Common myeloid progenitor, CD34-positive (primary cell): ENCODE measurements at regions of chr20 and their contacts with region 1.

Region 1: GRCh38 chr20:31496761-31497295 is 17.4 kb upstream of the HM13 start:
- DNase-seq: no peak
- H3K4me3 ChIP-seq: no peak overlapping the region
- H3K27ac ChIP-seq: no peak overlapping the region
- H3K4me1 ChIP-seq: no peaks in the 10 kb centered on the region
- H3K27me3 ChIP-seq: peaks cover 0 to 13% (median 0%) of the 10 kb centered on the region in 5 experiments

Region 2: DNA sequence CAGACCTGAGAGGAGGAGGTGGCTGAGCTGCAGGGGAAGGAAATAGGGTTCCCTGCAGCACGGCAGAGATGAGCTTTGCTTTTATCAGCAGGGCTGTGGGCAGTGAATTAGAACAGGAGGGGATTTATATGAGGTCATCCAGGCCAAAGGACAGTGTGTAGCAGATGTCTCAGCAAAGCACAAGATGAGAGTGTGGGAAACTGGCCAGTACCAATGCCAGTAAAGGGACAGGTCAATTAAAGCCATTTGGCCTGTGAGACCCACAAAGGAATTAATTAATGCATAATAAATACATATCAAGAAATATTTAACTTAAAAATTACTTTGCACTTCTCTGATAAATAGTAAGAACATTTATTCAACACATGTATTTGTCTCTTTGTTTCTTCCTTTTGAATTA is 106.3 kb before region 1 on chr20 and contains the start of gene DEFB119:
- CTCF ChIA-PET with region 1: no interaction called
- POLR2A ChIA-PET with region 1: no interaction called
- DNase-seq: no peak
- H3K4me3 ChIP-seq: no peak within 1 kb of the TSS
- H3K27ac ChIP-seq: no peak within 1 kb of the TSS
- H3K4me1 ChIP-seq: no peaks in the 10 kb centered on the region
- H3K27me3 ChIP-seq: peaks cover 0 to 10% (median 5%) of the 10 kb centered on the region in 5 experiments

Region 3: GRCh38 chr20:31452575-31452974 is 44.3 kb before region 1 on chr20:
- CTCF ChIA-PET with region 1: interaction called, 117 read pairs
- POLR2A ChIA-PET with region 1: no interaction called
- DNase-seq: no peak
- H3K4me3 ChIP-seq: no peak overlapping the region
- H3K27ac ChIP-seq: no peak overlapping the region
- H3K4me1 ChIP-seq: no peaks in the 10 kb centered on the region
- H3K27me3 ChIP-seq: peaks cover 0 to 3% (median 2%) of the 10 kb centered on the region in 5 experiments

Region 4: GRCh38 chr20:31474097-31474436 is 22.8 kb before region 1 on chr20:
- CTCF ChIA-PET with region 1: interaction called, 21 read pairs
- POLR2A ChIA-PET with region 1: no interaction called
- DNase-seq: no peak
- H3K4me3 ChIP-seq: no peak overlapping the region
- H3K27ac ChIP-seq: no peak overlapping the region
- H3K4me1 ChIP-seq: peaks cover 0 to 15% (median 7%) of the 10 kb centered on the region in 4 experiments
- H3K27me3 ChIP-seq: peaks cover 0 to 39% (median 19%) of the 10 kb centered on the region in 5 experiments

Region 5: GRCh38 chr20:31485450-31486339 is 11.1 kb before region 1 on chr20:
- CTCF ChIA-PET with region 1: interaction called, 99 read pairs
- POLR2A ChIA-PET with region 1: no interaction called
- DNase-seq: peak in 2 of 3 donors; percentile 37 to 44
- H3K4me3 ChIP-seq: peak overlapping the region in 3 of 7 experiments; percentile 50 to 63 (median 51)
- H3K27ac ChIP-seq: no peak overlapping the region
- H3K4me1 ChIP-seq: peaks cover 0 to 31% (median 9%) of the 10 kb centered on the region in 4 experiments
- H3K27me3 ChIP-seq: peaks cover 0 to 18% (median 0%) of the 10 kb centered on the region in 5 experiments

Region 6: DNA sequence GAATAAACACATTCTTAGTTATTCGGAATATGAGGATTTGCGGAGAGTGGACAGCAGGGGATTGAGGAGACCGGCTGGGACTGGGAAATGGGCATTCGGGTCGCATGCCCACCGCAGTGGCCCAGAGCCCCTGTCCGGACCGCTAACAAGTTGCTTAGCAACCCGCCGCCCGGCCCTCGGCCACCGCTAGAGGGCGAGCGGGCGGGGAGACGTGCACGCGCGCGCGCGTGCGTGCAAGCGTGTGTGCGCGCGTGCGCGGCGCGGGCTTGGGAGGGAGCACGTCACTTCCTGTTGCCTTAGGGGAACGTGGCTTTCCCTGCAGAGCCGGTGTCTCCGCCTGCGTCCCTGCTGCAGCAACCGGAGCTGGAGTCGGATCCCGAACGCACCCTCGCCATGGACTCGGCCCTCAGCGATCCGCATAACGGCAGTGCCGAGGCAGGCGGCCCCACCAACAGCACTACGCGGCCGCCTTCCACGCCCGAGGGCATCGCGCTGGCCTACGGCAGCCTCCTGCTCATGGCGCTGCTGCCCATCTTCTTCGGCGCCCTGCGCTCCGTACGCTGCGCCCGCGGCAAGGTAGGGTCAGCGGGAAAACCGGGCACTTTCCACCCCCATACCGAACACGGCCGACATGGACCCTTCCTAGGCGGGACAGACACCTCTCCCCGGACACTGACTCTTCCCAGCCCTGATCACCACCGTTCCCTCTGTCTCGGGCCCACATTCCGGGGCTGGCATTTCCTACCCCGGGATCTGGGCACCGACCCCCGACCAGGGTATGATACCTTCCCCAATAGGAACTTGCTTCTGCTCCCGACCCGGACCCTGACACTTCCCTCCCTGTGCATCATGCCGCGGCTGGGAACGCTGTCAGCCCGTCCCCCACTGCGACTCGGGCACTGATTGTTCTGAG is 17.6 kb after region 1 on chr20 and contains the start of gene HM13:
- CTCF ChIA-PET with region 1: interaction called, 16 read pairs
- POLR2A ChIA-PET with region 1: no interaction called
- DNase-seq: peak; percentile 92 to 95 (median 94)
- H3K4me3 ChIP-seq: peak within 1 kb of the TSS; percentile 81 to 99 (median 88)
- H3K27ac ChIP-seq: peak within 1 kb of the TSS; percentile 66 to 90
- H3K4me1 ChIP-seq: peaks cover 3 to 36% (median 34%) of the 10 kb centered on the region in 4 experiments
- H3K27me3 ChIP-seq: no peaks in the 10 kb centered on the region

Region 7: GRCh38 chr20:31527266-31527665 is 30.4 kb after region 1 on chr20:
- CTCF ChIA-PET with region 1: no interaction called
- POLR2A ChIA-PET with region 1: no interaction called
- DNase-seq: no peak
- H3K4me3 ChIP-seq: no peak overlapping the region
- H3K27ac ChIP-seq: no peak overlapping the region
- H3K4me1 ChIP-seq: peaks cover 5 to 30% (median 24%) of the 10 kb centered on the region in 4 experiments
- H3K27me3 ChIP-seq: no peaks in the 10 kb centered on the region

Region 8: DNA sequence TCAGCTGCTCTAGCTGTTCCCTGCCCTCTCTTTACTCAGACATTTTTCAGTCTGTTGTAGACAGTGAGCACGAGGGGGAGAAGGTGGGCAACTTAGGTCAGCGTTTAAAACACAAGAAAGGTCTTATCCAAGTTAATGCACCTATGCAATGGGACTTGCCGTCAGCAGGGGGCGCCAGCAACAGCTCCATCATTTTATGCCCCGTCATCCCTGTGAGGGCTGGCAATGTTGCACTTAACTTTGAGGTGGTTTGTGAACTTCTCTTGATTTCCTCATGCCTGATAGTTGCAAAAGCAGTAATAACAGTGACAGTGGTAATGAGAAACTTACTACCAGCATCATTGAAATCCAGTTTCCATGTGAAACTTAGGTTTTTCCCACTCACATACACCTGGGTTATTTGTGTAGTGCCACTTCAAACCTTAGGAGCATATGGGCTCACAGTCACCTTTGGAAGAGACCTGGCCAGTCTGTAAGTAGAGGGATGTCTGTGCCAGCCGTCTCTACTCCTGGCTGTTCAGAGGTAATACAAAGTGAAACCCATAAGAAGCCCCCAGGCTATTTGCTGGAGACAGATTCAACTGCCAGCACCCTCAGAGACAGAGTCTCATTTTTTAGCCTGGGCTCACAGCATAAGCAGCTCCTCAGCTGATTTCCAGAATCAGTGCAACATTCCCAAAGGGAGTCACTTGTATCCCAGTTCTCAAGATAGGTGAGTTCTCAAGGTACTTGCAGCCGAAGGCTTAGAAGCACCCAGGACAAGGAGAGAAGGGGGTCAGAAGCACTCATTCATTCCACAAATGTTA is 63.5 kb after region 1 on chr20:
- CTCF ChIA-PET with region 1: no interaction called
- POLR2A ChIA-PET with region 1: no interaction called
- DNase-seq: peak; percentile 86 to 95 (median 92)
- H3K4me3 ChIP-seq: no peak overlapping the region
- H3K27ac ChIP-seq: peak overlapping the region in 1 of 2 experiments; percentile 50
- H3K4me1 ChIP-seq: peaks cover 0 to 16% (median 13%) of the 10 kb centered on the region in 4 experiments
- H3K27me3 ChIP-seq: no peaks in the 10 kb centered on the region